CD8-positive, alpha-beta T cell (primary cell): ENCODE measurements at regions of chr6 and their contacts with region 1.

Region 1: DNA sequence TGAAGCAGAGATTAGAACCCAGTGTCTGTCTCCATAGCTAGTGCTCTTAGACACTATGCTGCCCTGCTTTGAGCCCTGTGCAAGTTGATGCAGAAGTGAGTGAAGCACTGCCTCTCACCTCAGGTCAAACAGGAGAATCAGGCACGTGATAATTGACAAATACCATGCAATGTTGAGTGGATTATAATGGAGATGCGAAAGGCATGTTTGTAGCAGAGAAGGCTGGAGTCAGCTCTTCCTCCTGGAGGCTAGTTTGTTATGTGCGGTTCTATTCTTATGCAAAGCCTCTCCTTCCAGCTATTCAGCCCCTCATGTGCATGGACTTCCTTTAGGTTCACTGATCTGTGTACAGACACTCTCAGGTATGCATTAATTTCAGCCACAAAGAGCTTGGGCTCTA is 108.5 kb downstream of the MANEA start:
- DNase-seq: no peak
- ATAC-seq: no peak
- H3K4me3 ChIP-seq: no peak overlapping the region
- H3K4me3 Mint-ChIP-seq: no peak overlapping the region
- H3K27ac ChIP-seq: no peak overlapping the region
- H3K27ac Mint-ChIP-seq: no peak overlapping the region
- H3K4me1 ChIP-seq: no peaks in the 10 kb centered on the region
- H3K4me1 Mint-ChIP-seq: no peaks in the 10 kb centered on the region
- H3K27me3 ChIP-seq: no peaks in the 10 kb centered on the region
- H3K27me3 Mint-ChIP-seq: no peaks in the 10 kb centered on the region
- CTCF ChIP-seq: no peak

Region 2: DNA sequence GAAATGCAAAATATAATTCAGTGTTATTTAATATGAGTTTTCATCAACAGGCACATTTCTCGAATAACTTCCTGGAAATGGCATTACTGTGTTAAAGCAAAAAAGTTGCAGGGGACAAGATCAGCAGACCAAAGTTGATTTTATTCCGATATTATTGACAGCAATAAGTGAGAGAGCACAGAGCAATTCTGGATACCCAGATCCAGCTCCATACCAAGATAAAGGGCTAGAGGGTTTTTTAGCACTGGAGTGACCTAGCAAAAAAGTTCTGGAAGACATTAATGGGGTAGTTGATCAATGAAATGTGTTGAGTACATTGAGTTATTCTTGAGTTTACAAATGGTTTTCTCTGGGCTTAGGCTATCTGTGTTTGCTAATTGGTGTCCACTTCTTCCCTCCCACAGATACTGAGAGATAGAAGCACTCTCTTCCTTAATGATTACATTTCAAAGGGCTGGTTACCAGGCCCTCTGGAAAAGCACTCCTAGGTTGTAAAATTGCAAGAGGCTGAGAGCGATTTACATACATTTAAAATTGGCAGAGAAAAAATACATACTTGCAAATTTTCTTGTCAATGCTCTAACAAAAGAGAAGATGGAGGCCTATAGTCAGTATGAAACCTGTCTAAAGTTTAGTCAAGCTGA is 155.5 kb before region 1 on chr6:
- CTCF ChIA-PET with region 1: no interaction called
- POLR2A ChIA-PET with region 1: no interaction called
- intact Hi-C with region 1: no loop called
- DNase-seq: no peak
- ATAC-seq: no peak
- H3K4me3 ChIP-seq: no peak overlapping the region
- H3K4me3 Mint-ChIP-seq: no peak overlapping the region
- H3K27ac ChIP-seq: no peak overlapping the region
- H3K27ac Mint-ChIP-seq: no peak overlapping the region
- H3K4me1 ChIP-seq: no peaks in the 10 kb centered on the region
- H3K4me1 Mint-ChIP-seq: no peaks in the 10 kb centered on the region
- H3K27me3 ChIP-seq: no peaks in the 10 kb centered on the region
- H3K27me3 Mint-ChIP-seq: peaks cover 3% of the 10 kb centered on the region
- CTCF ChIP-seq: no peak

Region 3: GRCh38 chr6:95636552-95637431 is 49.0 kb before region 1 on chr6:
- CTCF ChIA-PET with region 1: no interaction called
- POLR2A ChIA-PET with region 1: no interaction called
- intact Hi-C with region 1: loop called in 1 of 2 experiments (anchors 2 kb)
- DNase-seq: no peak
- ATAC-seq: no peak
- H3K4me3 ChIP-seq: no peak overlapping the region
- H3K4me3 Mint-ChIP-seq: no peak overlapping the region
- H3K27ac ChIP-seq: no peak overlapping the region
- H3K27ac Mint-ChIP-seq: no peak overlapping the region
- H3K4me1 ChIP-seq: no peaks in the 10 kb centered on the region
- H3K4me1 Mint-ChIP-seq: no peaks in the 10 kb centered on the region
- H3K27me3 ChIP-seq: no peaks in the 10 kb centered on the region
- H3K27me3 Mint-ChIP-seq: no peaks in the 10 kb centered on the region
- CTCF ChIP-seq: no peak

Region 4: DNA sequence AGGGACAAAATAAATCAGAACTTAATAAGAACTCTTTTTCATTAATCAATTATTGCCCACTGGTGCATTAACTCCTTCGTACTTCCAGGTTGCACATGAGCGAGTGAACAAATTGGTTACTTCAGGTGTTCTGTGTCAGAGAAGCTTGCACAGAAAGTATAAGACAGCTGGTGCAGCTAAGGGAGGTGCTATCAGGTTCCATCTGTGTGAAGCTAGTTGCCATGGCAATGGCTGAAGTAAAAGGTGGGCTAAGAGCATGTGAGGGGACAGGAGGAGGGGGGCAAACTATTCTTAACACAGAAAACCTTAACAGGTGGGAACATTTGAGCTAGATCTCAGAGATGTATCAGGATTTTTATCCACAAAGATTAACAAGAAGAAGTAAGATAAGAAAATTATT is 26.9 kb before region 1 on chr6:
- CTCF ChIA-PET with region 1: no interaction called
- POLR2A ChIA-PET with region 1: no interaction called
- intact Hi-C with region 1: no loop called
- DNase-seq: no peak
- ATAC-seq: no peak
- H3K4me3 ChIP-seq: no peak overlapping the region
- H3K4me3 Mint-ChIP-seq: no peak overlapping the region
- H3K27ac ChIP-seq: no peak overlapping the region
- H3K27ac Mint-ChIP-seq: no peak overlapping the region
- H3K4me1 ChIP-seq: no peaks in the 10 kb centered on the region
- H3K4me1 Mint-ChIP-seq: no peaks in the 10 kb centered on the region
- H3K27me3 ChIP-seq: no peaks in the 10 kb centered on the region
- H3K27me3 Mint-ChIP-seq: no peaks in the 10 kb centered on the region
- CTCF ChIP-seq: no peak

Region 5: GRCh38 chr6:95847061-95847460 is 161.2 kb after region 1 on chr6:
- CTCF ChIA-PET with region 1: no interaction called
- POLR2A ChIA-PET with region 1: no interaction called
- intact Hi-C with region 1: no loop called
- DNase-seq: no peak
- ATAC-seq: no peak
- H3K4me3 ChIP-seq: no peak overlapping the region
- H3K4me3 Mint-ChIP-seq: no peak overlapping the region
- H3K27ac ChIP-seq: no peak overlapping the region
- H3K27ac Mint-ChIP-seq: no peak overlapping the region
- H3K4me1 ChIP-seq: no peaks in the 10 kb centered on the region
- H3K4me1 Mint-ChIP-seq: no peaks in the 10 kb centered on the region
- H3K27me3 ChIP-seq: no peaks in the 10 kb centered on the region
- H3K27me3 Mint-ChIP-seq: no peaks in the 10 kb centered on the region
- CTCF ChIP-seq: no peak